Naive thymus-derived CD4-positive, alpha-beta T cell (primary cell): ENCODE measurements at regions of chr11 and their contacts with region 1.

Region 1: DNA sequence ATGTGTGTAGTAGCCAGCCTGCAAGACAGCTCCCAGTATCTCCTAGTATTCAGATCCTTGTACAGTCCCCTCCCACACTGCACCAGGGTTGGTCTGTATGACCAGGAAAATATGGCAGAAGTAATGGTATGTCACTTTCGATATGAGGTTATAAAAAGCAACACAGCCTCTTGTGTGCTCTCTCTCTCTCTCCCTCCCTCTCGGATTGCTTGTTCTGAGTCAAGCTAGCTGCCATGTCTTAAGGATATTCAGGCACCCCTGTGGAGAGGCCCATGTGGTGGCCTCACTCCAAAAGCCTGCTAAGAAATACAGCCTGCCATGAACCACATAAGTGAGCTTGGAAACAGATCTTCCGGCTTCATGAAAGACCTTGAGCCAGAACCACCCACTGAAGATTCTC is 25.4 kb downstream of the FXYD6 start:
- DNase-seq: no peak
- ATAC-seq: no peak
- H3K4me3 ChIP-seq: no peak overlapping the region
- H3K4me3 Mint-ChIP-seq: no peak overlapping the region
- H3K27ac ChIP-seq: no peak overlapping the region
- H3K27ac Mint-ChIP-seq: no peak overlapping the region
- H3K4me1 ChIP-seq: no peaks in the 10 kb centered on the region
- H3K4me1 Mint-ChIP-seq: peaks cover 0 to 6% (median 0%) of the 10 kb centered on the region in 7 donors
- H3K27me3 ChIP-seq: no peaks in the 10 kb centered on the region
- H3K27me3 Mint-ChIP-seq: peaks cover 0 to 53% (median 6%) of the 10 kb centered on the region in 5 donors

Region 2: DNA sequence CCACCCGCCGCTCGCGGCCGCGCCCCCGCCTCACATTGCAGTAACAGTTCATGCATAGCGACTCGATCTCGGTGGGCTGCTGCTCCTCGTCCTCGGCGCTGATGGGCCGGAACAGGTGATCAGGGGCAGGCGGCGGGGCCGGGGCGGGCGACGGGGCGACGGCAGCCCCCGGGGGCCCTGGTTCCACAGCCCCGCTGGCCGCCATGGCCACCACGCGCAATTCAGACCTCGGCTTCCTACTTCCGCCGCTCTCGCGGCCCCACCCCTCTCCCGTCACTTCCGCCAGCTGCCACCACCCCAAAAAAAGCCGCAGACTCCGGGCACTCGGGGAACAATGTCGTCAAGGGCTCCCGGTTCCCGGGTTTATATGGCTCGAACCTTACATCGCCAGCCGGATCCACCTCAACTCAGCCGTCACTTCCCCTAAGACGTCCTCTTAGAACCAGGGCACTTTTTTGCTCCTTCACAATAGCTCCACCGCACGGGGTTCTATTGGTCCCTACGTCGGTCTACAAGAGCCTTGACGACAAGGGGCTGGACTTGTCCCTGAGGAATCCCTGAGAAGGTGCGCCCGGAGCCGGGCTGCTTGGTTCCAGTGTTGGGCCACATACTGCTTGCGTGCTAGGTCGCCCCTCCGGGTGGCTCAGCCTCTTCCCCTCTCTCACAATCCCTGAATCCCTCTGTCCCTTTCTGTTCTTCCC is 1063.2 kb before region 1 on chr11 and contains the start of gene ZPR1:
- CTCF ChIA-PET with region 1: no interaction called
- POLR2A ChIA-PET with region 1: no interaction called
- intact Hi-C with region 1: no loop called
- DNase-seq: peak; percentile 75 to 88 (median 87)
- ATAC-seq: peak; percentile 92
- H3K4me3 ChIP-seq: peak within 1 kb of the TSS; percentile 79
- H3K4me3 Mint-ChIP-seq: peak within 1 kb of the TSS; percentile 85 to 98 (median 92)
- H3K27ac ChIP-seq: peak within 1 kb of the TSS; percentile 95
- H3K27ac Mint-ChIP-seq: peak within 1 kb of the TSS; percentile 80 to 98 (median 96)
- H3K4me1 ChIP-seq: peaks cover 17 to 24% of the 10 kb centered on the region in 2 donors
- H3K4me1 Mint-ChIP-seq: peaks cover 32 to 57% (median 44%) of the 10 kb centered on the region in 7 donors
- H3K27me3 ChIP-seq: no peaks in the 10 kb centered on the region
- H3K27me3 Mint-ChIP-seq: no peaks in the 10 kb centered on the region
- total RNA-seq, gene ZPR1: 65.8 to 117 (median 68.8) TPM

Region 3: DNA sequence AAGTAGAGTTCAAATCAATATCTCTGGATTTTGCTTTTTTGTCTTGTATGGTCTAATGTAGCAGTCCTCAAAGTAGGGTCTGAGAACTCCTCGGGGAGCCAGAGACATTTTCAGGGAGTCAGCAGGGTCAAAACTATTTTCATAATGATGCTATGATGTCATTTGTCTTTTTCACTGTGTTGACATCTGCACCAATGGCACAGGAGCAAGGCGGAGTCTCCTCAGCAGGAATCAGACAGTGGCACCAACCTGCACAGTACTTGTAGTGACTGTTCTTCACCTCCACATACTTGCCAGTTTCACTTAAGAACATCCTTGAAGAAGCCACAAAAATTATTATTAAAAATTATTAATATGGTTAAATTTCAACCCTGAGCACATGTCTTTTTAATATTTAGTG is 40.3 kb after region 1 on chr11:
- CTCF ChIA-PET with region 1: no interaction called
- POLR2A ChIA-PET with region 1: no interaction called
- intact Hi-C with region 1: loop called in 1 of 2 experiments (anchors 5 kb)
- DNase-seq: no peak
- ATAC-seq: no peak
- H3K4me3 ChIP-seq: no peak overlapping the region
- H3K4me3 Mint-ChIP-seq: no peak overlapping the region
- H3K27ac ChIP-seq: no peak overlapping the region
- H3K27ac Mint-ChIP-seq: no peak overlapping the region
- H3K4me1 ChIP-seq: no peaks in the 10 kb centered on the region
- H3K4me1 Mint-ChIP-seq: no peaks in the 10 kb centered on the region
- H3K27me3 ChIP-seq: peaks cover 0 to 3% of the 10 kb centered on the region in 2 donors
- H3K27me3 Mint-ChIP-seq: peaks cover 0 to 42% (median 7%) of the 10 kb centered on the region in 5 donors